ENCODE measurements at regions of chr9 and their contacts with region 1.

Region 1: GRCh38 chr9:74773886-74774479 is 113.7 kb downstream of the TRPM6 start:
- DNase-seq: peak; percentile 63
- ATAC-seq: peak; percentile 70
- H3K4me3 ChIP-seq: no peak overlapping the region
- H3K27ac ChIP-seq: no peak overlapping the region
- H3K4me1 ChIP-seq: peaks cover 41% of the 10 kb centered on the region
- H3K27me3 ChIP-seq: no peaks in the 10 kb centered on the region
- CTCF ChIP-seq: peak; percentile 87
- EP300 ChIP-seq: no peak
- POLR2A ChIP-seq: no peak
- RAD21 ChIP-seq: peak; percentile 75

Region 2: DNA sequence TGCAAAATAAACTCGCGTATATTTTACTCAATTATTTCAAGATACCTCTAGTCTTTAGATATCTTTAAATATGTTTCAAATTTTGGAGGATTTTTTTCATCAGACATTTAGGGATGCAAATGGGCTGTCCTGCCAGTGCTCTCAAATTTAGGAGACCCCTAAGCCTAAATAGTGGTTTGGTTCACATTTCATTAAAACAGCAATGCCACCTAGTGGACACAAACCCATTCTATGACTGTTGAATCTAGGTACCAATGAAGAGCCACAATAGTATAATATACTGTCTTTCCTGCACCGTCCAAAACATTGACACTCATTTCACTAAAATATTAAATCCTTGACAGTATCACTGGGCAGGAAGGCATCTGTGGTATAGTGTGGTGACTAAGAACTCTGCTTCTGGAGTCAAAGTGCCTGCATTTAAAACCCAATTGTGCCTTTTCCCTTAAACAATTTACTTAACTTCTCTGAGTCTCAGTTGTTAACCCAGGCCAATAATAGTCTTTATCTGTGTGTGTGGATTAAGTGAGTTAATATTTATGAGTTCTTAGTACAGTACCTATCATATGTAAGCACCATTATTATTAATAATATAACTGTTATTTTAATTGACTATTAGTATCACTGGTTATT is 128.9 kb before region 1 on chr9:
- CTCF ChIA-PET with region 1: no interaction called
- POLR2A ChIA-PET with region 1: no interaction called
- in situ Hi-C with region 1: no loop called
- intact Hi-C with region 1: no loop called
- DNase-seq: peak; percentile 18
- ATAC-seq: peak; percentile 73
- H3K4me3 ChIP-seq: no peak overlapping the region
- H3K27ac ChIP-seq: no peak overlapping the region
- H3K4me1 ChIP-seq: no peaks in the 10 kb centered on the region
- H3K27me3 ChIP-seq: peaks cover 0 to 6% of the 10 kb centered on the region in 2 experiments; a peak in 1 of 5 replicates
- CTCF ChIP-seq: peak; percentile 59
- EP300 ChIP-seq: no peak
- POLR2A ChIP-seq: no peak
- RAD21 ChIP-seq: no peak

Region 3: DNA sequence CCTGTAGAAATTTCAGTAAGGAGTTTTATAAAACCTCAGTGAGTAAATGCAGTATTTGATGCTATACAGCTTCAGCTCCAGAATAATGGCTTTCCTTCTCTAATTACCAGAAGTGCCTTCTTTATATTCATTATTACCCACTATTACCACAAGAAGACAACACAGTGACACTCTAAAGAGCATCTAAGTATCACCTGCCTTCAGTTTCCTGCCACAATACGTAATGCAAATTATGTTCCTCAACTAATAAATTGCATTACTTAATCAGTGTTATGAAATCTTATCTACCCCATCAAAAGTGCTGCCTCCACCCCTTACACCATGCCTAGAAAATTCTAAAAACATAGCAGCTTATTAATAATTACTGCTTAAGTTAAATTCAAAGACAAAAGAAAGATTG is 21.8 kb after region 1 on chr9:
- CTCF ChIA-PET with region 1: no interaction called
- POLR2A ChIA-PET with region 1: no interaction called
- in situ Hi-C with region 1: no loop called
- intact Hi-C with region 1: no loop called
- DNase-seq: no peak
- ATAC-seq: no peak
- H3K4me3 ChIP-seq: no peak overlapping the region
- H3K27ac ChIP-seq: no peak overlapping the region
- H3K4me1 ChIP-seq: no peaks in the 10 kb centered on the region
- H3K27me3 ChIP-seq: no peaks in the 10 kb centered on the region
- CTCF ChIP-seq: no peak
- EP300 ChIP-seq: no peak
- POLR2A ChIP-seq: no peak
- RAD21 ChIP-seq: no peak

Region 4: DNA sequence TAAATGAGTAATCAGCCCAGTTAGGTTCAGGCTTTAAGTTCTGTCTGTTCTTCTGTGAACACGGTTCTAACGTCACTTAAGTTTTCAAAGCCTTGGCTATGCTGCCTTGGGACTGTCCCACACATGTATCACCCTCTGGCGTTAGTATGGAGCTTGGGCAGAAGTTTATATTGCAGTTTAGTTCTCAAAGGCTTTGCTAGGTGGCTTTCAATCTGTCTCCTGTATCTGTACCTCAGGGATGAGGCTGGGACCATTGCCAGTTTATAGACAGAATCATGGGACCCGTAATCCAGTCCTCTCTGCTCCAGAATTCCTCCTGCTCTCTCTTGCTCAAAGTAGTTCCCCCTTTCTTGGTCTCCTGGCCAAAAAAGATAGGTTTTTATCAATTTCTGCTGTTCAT is 166.6 kb after region 1 on chr9:
- CTCF ChIA-PET with region 1: interaction called, 4 read pairs
- POLR2A ChIA-PET with region 1: no interaction called
- in situ Hi-C with region 1: loop called (anchors 10 kb)
- intact Hi-C with region 1: loop called (anchors 1 kb)
- DNase-seq: peak; percentile 85
- ATAC-seq: peak; percentile 100
- H3K4me3 ChIP-seq: peak overlapping the region; percentile 12 to 50 (median 13); a peak in 4 of 6 replicates
- H3K27ac ChIP-seq: no peak overlapping the region
- H3K4me1 ChIP-seq: peaks cover 40% of the 10 kb centered on the region
- H3K27me3 ChIP-seq: no peaks in the 10 kb centered on the region
- CTCF ChIP-seq: peak; percentile 76
- EP300 ChIP-seq: no peak
- POLR2A ChIP-seq: no peak
- RAD21 ChIP-seq: peak; percentile 64

Region 5: DNA sequence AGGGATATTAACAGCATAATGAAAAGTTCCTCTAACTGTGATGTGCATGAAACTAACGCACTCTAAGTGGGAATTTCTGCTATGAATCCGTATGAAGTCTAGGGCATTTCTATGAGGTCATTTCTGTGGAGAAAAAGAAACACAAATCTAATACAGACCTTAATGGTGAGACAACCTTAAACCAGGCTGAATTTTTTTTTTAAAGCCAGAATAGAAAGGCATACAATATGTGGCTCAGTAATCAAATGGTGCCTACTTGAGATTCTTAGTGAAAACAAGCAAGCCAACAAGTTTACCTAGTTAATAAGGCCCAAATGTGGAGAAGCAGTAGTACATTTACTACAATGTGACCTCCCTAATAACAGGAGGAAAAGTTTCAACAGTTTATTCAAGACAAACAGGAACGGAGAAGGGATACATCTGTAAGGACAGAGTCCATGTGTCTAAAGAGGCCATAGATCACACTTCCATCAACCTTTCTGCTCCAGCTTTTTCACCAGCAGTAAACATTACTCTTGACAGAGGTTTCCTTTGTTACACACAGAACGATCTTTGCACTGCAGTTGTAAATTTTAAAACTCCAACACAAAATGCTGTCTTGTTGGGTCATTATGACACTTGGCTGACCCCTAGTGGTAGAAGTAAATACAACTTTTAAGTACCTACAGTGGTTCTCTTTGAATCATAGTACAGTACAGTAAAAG is 227.9 kb after region 1 on chr9:
- CTCF ChIA-PET with region 1: interaction called, 41 read pairs
- POLR2A ChIA-PET with region 1: interaction called, 14 read pairs
- in situ Hi-C with region 1: loop called (anchors 5 kb)
- intact Hi-C with region 1: loop called (anchors 1 kb)
- DNase-seq: peak; percentile 99
- ATAC-seq: peak; percentile 99
- H3K4me3 ChIP-seq: peak overlapping the region in 2 of 3 experiments; percentile 15 to 43; a peak in 3 of 6 replicates
- H3K27ac ChIP-seq: peak overlapping the region; percentile 91
- H3K4me1 ChIP-seq: peaks cover 38% of the 10 kb centered on the region
- H3K27me3 ChIP-seq: no peaks in the 10 kb centered on the region
- CTCF ChIP-seq: peak; percentile 90
- EP300 ChIP-seq: peak in 1 of 2 experiments; percentile 94; a peak in 2 of 4 replicates
- POLR2A ChIP-seq: 0 out of 4 replicates have a peak, but pooled peaks of 1 of the 2 experiments have one; percentile 46
- RAD21 ChIP-seq: peak; percentile 89

Region 6: DNA sequence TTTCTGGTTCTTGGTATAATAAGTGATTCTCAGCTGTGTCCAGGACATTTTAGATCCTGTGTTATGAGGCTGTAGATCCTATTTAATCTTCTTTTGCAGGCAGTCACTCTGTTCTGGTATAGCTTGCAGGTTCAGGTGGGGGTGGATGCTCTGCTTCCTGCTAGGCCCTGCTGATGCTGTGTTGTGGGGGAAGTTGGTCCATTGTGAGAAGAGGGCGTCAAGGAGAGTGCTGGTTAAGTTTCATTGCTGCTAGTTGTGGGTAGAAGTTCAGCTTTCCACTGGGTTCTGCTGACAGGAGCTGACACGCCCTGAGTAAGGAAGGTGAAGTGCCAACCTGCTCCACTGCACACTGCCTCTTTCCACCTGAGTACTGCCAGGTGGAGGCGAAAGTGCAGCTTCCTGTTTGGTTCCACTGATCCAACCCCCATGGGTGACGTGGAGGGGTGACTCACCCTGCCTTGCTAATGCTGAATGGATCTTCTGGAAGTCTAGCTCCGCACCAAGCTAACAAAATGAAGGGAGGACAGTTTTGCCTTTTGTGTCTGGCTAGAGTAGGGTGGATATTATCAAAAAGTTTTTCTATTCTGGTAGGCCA is 297.6 kb after region 1 on chr9:
- CTCF ChIA-PET with region 1: interaction called, 61 read pairs
- POLR2A ChIA-PET with region 1: no interaction called
- in situ Hi-C with region 1: loop called (anchors 5 kb)
- intact Hi-C with region 1: no loop called
- DNase-seq: no peak
- ATAC-seq: no peak
- H3K4me3 ChIP-seq: no peak overlapping the region
- H3K27ac ChIP-seq: no peak overlapping the region
- H3K4me1 ChIP-seq: no peaks in the 10 kb centered on the region
- H3K27me3 ChIP-seq: no peaks in the 10 kb centered on the region
- CTCF ChIP-seq: no peak
- EP300 ChIP-seq: no peak
- POLR2A ChIP-seq: no peak
- RAD21 ChIP-seq: no peak

Region 7: DNA sequence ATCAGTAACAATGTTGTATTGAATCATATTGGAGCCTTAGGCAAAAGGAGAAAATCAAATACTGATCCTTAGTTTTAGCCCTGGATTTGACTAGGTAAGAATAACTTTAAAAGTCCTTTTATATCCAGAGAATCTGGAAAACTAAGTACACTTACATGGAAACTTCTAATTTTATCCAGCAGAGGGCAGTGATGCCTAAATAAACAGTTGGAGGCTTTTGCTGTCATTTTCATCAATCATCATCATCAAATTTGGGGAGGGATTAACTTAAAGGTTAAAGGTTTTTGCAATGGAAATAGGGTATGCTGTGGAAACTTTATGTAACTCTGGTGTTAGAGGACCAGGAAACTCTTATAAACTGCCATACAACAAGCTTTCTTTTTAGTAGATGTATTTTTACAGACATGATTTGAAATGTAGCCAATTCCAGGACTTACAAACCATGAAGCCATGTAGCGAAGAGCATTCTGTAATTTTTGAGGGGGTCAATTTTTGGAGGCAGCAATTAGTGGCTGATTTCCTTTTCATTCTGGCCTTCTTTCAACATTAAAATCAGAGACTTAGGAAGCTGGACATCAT is 427.0 kb after region 1 on chr9:
- CTCF ChIA-PET with region 1: no interaction called
- POLR2A ChIA-PET with region 1: no interaction called
- in situ Hi-C with region 1: no loop called
- intact Hi-C with region 1: no loop called
- DNase-seq: peak; percentile 47
- ATAC-seq: no peak; the same call in 2 of the 3 replicates
- H3K4me3 ChIP-seq: no peak overlapping the region
- H3K27ac ChIP-seq: no peak overlapping the region
- H3K4me1 ChIP-seq: no peaks in the 10 kb centered on the region
- H3K27me3 ChIP-seq: peaks cover 0 to under 1% of the 10 kb centered on the region in 2 experiments; a peak in 2 of 5 replicates
- CTCF ChIP-seq: peak; percentile 63
- EP300 ChIP-seq: no peak
- POLR2A ChIP-seq: no peak
- RAD21 ChIP-seq: peak; percentile 49

Region 8: GRCh38 chr9:75238311-75238978 is 464.5 kb after region 1 on chr9:
- CTCF ChIA-PET with region 1: no interaction called
- POLR2A ChIA-PET with region 1: no interaction called
- in situ Hi-C with region 1: no loop called
- intact Hi-C with region 1: loop called (anchors 1 kb)
- DNase-seq: peak; percentile 64
- ATAC-seq: peak; percentile 99
- H3K4me3 ChIP-seq: no peak overlapping the region
- H3K27ac ChIP-seq: no peak overlapping the region
- H3K4me1 ChIP-seq: peaks cover 9% of the 10 kb centered on the region; the same call in 1 of the 2 replicates
- H3K27me3 ChIP-seq: no peaks in the 10 kb centered on the region
- CTCF ChIP-seq: peak; percentile 89
- EP300 ChIP-seq: no peak
- POLR2A ChIP-seq: no peak
- RAD21 ChIP-seq: peak; percentile 72; the same call in 1 of the 2 replicates